CD4-positive, alpha-beta T cell (primary cell): ENCODE measurements at regions of chr10 and their contacts with region 1.

Region 1: GRCh38 chr10:103888113-103888841 is 29.7 kb downstream of the STN1 start:
- DNase-seq: peak in 5 of 14 experiments; percentile 5 to 76 (median 73)
- ATAC-seq: peak; percentile 90
- H3K4me3 ChIP-seq: no peak overlapping the region
- H3K4me3 Mint-ChIP-seq: no peak overlapping the region
- H3K27ac ChIP-seq: no peak overlapping the region
- H3K27ac Mint-ChIP-seq: peak overlapping the region; percentile 35
- H3K4me1 ChIP-seq: peaks cover 26% of the 10 kb centered on the region
- H3K4me1 Mint-ChIP-seq: peaks cover 20% of the 10 kb centered on the region
- H3K27me3 ChIP-seq: no peaks in the 10 kb centered on the region
- H3K27me3 Mint-ChIP-seq: no peaks in the 10 kb centered on the region
- CTCF ChIP-seq: peak; percentile 86

Region 2: GRCh38 chr10:103712570-103713498 is 175.4 kb before region 1 on chr10:
- CTCF ChIA-PET with region 1: interaction called, 9 read pairs
- POLR2A ChIA-PET with region 1: no interaction called
- intact Hi-C with region 1: loop called in 1 of 2 experiments (anchors 1 kb)
- DNase-seq: peak; percentile 68 to 87 (median 79)
- ATAC-seq: peak; percentile 94
- H3K4me3 ChIP-seq: no peak overlapping the region
- H3K4me3 Mint-ChIP-seq: no peak overlapping the region
- H3K27ac ChIP-seq: no peak overlapping the region
- H3K27ac Mint-ChIP-seq: no peak overlapping the region
- H3K4me1 ChIP-seq: peaks cover 7% of the 10 kb centered on the region
- H3K4me1 Mint-ChIP-seq: no peaks in the 10 kb centered on the region
- H3K27me3 ChIP-seq: no peaks in the 10 kb centered on the region
- H3K27me3 Mint-ChIP-seq: no peaks in the 10 kb centered on the region
- CTCF ChIP-seq: peak; percentile 88

Region 3: GRCh38 chr10:103966671-103967447 is 78.6 kb after region 1 on chr10 and contains the start of gene SLK:
- CTCF ChIA-PET with region 1: interaction called, 4 read pairs
- POLR2A ChIA-PET with region 1: interaction called, 8 read pairs
- intact Hi-C with region 1: loop called (anchors 1 to 5 kb)
- DNase-seq: peak; percentile 59 to 96 (median 81)
- ATAC-seq: peak; percentile 82
- H3K4me3 ChIP-seq: peak within 1 kb of the TSS; percentile 94
- H3K4me3 Mint-ChIP-seq: peak within 1 kb of the TSS; percentile 95
- H3K27ac ChIP-seq: peak within 1 kb of the TSS; percentile 76 to 83
- H3K27ac Mint-ChIP-seq: peak within 1 kb of the TSS; percentile 91
- H3K4me1 ChIP-seq: peaks cover 13% of the 10 kb centered on the region
- H3K4me1 Mint-ChIP-seq: peaks cover 43% of the 10 kb centered on the region
- H3K27me3 ChIP-seq: no peaks in the 10 kb centered on the region
- H3K27me3 Mint-ChIP-seq: no peaks in the 10 kb centered on the region
- CTCF ChIP-seq: no peak
- total RNA-seq, gene SLK: 20.5 to 20.8 TPM

Region 4: DNA sequence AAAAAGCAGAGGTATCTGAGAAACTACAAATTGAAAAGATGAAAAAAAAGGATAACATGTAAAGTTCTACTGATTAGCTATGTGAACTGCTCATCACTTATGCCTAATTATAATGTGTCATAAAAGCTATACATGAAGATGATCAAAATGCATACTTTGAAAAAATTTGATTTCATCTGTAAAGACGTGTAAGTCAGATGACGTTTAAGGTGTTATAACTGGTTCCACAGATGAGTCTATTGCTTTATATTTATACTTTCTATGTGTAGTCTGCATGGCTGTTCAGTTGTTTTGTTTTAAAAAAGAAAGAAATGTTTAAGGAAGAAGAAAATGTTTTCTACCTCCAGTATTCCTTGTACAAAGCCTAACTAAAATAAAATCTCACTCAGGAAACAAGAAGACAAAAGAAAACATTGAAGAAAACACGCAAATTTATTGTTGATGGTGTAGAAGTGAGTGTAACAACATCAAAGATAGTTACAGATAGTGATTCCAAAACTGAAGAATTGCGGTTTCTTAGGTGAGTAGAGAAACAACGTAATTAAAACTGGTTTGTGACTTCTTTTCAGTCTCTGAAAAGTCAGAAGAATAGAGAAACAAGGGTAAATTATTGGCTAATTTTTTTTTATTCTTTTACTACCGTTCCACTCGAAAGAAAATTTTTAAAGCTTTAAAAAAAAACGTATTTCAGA is 117.0 kb after region 1 on chr10:
- CTCF ChIA-PET with region 1: interaction called, 4 read pairs
- POLR2A ChIA-PET with region 1: no interaction called
- intact Hi-C with region 1: loop called in 1 of 2 experiments (anchors 5 kb)
- DNase-seq: no peak
- ATAC-seq: no peak
- H3K4me3 ChIP-seq: no peak overlapping the region
- H3K4me3 Mint-ChIP-seq: no peak overlapping the region
- H3K27ac ChIP-seq: no peak overlapping the region
- H3K27ac Mint-ChIP-seq: no peak overlapping the region
- H3K4me1 ChIP-seq: no peaks in the 10 kb centered on the region
- H3K4me1 Mint-ChIP-seq: peaks cover 4% of the 10 kb centered on the region
- H3K27me3 ChIP-seq: no peaks in the 10 kb centered on the region
- H3K27me3 Mint-ChIP-seq: no peaks in the 10 kb centered on the region
- CTCF ChIP-seq: no peak

Region 5: GRCh38 chr10:104080762-104081161 is 192.5 kb after region 1 on chr10:
- CTCF ChIA-PET with region 1: no interaction called
- POLR2A ChIA-PET with region 1: no interaction called
- intact Hi-C with region 1: loop called (anchors 1 to 2 kb)
- DNase-seq: peak in 4 of 14 experiments; percentile 32 to 59 (median 44)
- ATAC-seq: no peak
- H3K4me3 ChIP-seq: no peak overlapping the region
- H3K4me3 Mint-ChIP-seq: no peak overlapping the region
- H3K27ac ChIP-seq: no peak overlapping the region
- H3K27ac Mint-ChIP-seq: no peak overlapping the region
- H3K4me1 ChIP-seq: no peaks in the 10 kb centered on the region
- H3K4me1 Mint-ChIP-seq: no peaks in the 10 kb centered on the region
- H3K27me3 ChIP-seq: no peaks in the 10 kb centered on the region
- H3K27me3 Mint-ChIP-seq: no peaks in the 10 kb centered on the region
- CTCF ChIP-seq: peak; percentile 61